PC-9 (cell line): ENCODE measurements at regions of chr19 and their contacts with region 1.

Region 1: DNA sequence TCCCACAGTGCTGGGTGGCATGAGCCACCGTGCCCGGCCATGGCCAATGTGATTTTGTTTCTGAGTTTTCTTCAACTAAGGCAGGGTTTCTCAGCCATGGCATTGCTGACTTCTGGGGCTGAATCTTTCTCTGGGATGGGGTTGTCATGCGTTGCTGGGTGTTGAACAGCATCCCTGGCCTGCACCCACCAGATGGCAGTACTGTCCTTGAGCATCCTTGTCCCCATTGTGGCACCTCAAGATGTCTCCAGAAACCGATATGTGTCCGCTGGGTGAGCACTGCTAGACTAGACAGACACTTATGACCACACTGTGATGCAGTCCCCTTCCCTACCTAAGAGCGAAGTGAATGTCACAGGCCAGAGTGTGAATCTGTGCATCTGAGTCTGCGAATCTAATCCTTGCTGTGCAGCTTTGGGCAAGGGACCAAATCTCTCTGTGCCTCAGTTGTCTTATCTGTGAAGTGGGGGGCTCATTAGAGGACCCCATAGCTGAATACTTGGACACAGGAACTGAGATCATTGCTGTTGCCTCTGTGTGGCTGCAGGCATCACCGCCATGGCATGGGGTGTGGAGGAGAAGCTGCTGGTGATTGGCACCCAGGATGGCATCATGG is 50.3 kb upstream of the SIN3B start:
- DNase-seq: peak; percentile 54 to 61
- H3K4me3 ChIP-seq: no peak overlapping the region
- H3K27ac ChIP-seq: no peak overlapping the region
- H3K4me1 ChIP-seq: no peaks in the 10 kb centered on the region
- H3K27me3 ChIP-seq: no peaks in the 10 kb centered on the region
- CTCF ChIP-seq: peak; percentile 83

Region 2: DNA sequence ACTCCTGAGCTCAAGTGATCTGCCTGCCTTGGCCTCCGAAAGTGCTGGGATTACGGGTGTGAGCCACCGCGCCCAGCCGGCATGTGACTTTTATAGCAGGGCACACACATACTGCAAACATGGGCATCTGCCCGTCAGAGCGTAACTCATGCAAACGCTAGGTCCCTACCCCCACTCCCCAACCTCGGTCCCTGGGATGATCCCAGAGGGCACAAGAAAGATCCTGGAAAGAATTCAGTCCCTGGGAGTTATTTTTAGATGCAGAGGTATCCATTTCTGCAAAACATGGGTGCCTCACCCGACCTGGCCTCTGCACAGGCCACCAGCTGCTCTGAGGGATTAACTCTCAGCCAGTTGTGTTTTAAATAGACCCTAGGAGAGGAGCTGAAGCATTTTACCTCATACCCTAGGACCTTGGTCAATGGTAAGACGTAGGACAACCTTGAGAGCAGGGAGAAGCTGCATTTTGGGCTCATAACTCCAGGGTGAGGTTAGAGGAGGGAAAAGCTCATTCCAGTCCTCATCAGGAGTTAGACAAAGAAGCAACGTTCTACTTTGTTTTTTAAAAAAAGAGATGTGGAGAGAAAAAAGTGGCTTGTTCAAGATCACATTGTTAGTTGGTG is 107.1 kb before region 1 on chr19:
- CTCF ChIA-PET with region 1: interaction called, 15 read pairs
- POLR2A ChIA-PET with region 1: no interaction called
- intact Hi-C with region 1: no loop called
- DNase-seq: no peak
- H3K4me3 ChIP-seq: no peak overlapping the region
- H3K27ac ChIP-seq: no peak overlapping the region
- H3K4me1 ChIP-seq: peaks cover 2% of the 10 kb centered on the region; the same call in 1 of the 2 replicates
- H3K27me3 ChIP-seq: no peaks in the 10 kb centered on the region
- CTCF ChIP-seq: no peak

Region 3: GRCh38 chr19:16726916-16727315 is 52.0 kb before region 1 on chr19:
- CTCF ChIA-PET with region 1: no interaction called
- POLR2A ChIA-PET with region 1: no interaction called
- intact Hi-C with region 1: no loop called
- DNase-seq: no peak
- H3K4me3 ChIP-seq: no peak overlapping the region
- H3K27ac ChIP-seq: no peak overlapping the region
- H3K4me1 ChIP-seq: no peaks in the 10 kb centered on the region
- H3K27me3 ChIP-seq: no peaks in the 10 kb centered on the region
- CTCF ChIP-seq: no peak

Region 4: DNA sequence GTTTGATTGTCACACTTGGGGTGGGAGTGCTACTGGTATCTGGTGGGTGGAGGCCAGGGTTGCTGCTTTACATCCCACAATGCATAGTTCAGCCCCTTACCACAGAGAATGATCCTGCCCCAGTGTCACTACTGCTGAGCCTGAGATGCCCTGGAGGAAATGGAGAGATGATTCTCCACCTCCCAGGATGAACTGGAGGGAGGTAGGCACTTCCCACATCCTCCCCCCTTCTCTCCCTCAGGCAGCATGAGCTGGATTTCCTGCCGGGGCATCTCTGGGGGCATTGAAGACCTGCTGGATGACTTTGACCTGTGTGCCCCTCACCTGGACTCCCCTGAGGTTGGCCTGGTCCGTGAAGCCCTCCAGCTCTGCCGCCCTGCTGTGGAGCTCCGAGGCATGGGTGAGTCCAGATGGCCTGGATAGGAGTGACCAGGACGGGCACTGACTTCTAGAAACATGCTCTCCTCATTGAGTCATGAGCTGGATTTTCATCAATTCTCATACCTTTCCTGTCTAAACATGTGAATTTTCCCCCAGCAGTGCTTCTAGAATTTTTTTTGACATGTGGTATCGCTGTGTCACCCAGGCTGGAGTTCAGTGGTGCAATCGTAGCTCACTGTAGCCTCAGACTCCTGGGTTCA is 14.0 kb before region 1 on chr19:
- CTCF ChIA-PET with region 1: no interaction called
- POLR2A ChIA-PET with region 1: no interaction called
- intact Hi-C with region 1: no loop called
- DNase-seq: no peak
- H3K4me3 ChIP-seq: no peak overlapping the region
- H3K27ac ChIP-seq: no peak overlapping the region
- H3K4me1 ChIP-seq: no peaks in the 10 kb centered on the region
- H3K27me3 ChIP-seq: no peaks in the 10 kb centered on the region
- CTCF ChIP-seq: no peak

Region 5: GRCh38 chr19:16829010-16829821 is 50.3 kb after region 1 on chr19 and contains the start of gene SIN3B:
- CTCF ChIA-PET with region 1: no interaction called
- POLR2A ChIA-PET with region 1: no interaction called
- intact Hi-C with region 1: loop called (anchors 5 kb)
- DNase-seq: peak; percentile 86 to 88
- H3K4me3 ChIP-seq: peak within 1 kb of the TSS; percentile 94
- H3K27ac ChIP-seq: 0 out of 2 replicates have a peak within 1 kb of the TSS, but pooled peaks have one; percentile 3
- H3K4me1 ChIP-seq: peaks cover 25% of the 10 kb centered on the region
- H3K27me3 ChIP-seq: no peaks in the 10 kb centered on the region
- CTCF ChIP-seq: no peak
- total RNA-seq, gene SIN3B: 72.6 and 83.8 TPM in 2 replicates

Region 6: DNA sequence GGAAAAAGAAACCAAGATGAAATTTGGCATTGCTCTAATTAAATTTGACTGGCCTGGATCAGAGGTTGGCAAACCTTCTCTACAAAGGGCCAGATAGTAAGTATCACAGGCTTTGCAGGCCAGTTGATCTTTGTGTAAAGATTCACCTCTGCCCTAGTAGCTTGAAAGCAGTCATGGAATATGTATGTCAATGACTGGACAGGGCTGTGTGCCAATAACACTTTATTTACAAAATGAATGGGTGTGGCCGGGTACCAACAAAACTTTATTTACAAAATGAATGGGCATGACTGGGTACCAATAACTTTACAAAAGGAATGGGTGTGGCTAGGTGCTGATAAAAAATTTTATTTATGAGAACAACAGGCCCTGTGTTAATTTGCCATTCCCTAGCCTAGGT is 70.3 kb after region 1 on chr19:
- CTCF ChIA-PET with region 1: no interaction called
- POLR2A ChIA-PET with region 1: no interaction called
- intact Hi-C with region 1: loop called (anchors 5 kb)
- DNase-seq: peak in 1 of 2 experiments; percentile 85
- H3K4me3 ChIP-seq: 0 out of 2 replicates have a peak overlapping the region, but pooled peaks have one; percentile 4
- H3K27ac ChIP-seq: peak overlapping the region; percentile 63
- H3K4me1 ChIP-seq: peaks cover 27% of the 10 kb centered on the region
- H3K27me3 ChIP-seq: no peaks in the 10 kb centered on the region
- CTCF ChIP-seq: no peak

Region 7: GRCh38 chr19:16899566-16900075 is 120.7 kb after region 1 on chr19:
- CTCF ChIA-PET with region 1: no interaction called
- POLR2A ChIA-PET with region 1: no interaction called
- intact Hi-C with region 1: loop called (anchors 2 kb)
- DNase-seq: peak; percentile 45 to 48
- H3K4me3 ChIP-seq: no peak overlapping the region
- H3K27ac ChIP-seq: no peak overlapping the region
- H3K4me1 ChIP-seq: peaks cover 3% of the 10 kb centered on the region; the same call in 1 of the 2 replicates
- H3K27me3 ChIP-seq: no peaks in the 10 kb centered on the region
- CTCF ChIP-seq: peak; percentile 82

Region 8: GRCh38 chr19:17052439-17053210 is 273.7 kb after region 1 on chr19:
- CTCF ChIA-PET with region 1: interaction called, 5 read pairs
- POLR2A ChIA-PET with region 1: no interaction called
- intact Hi-C with region 1: loop called (anchors 1 kb)
- DNase-seq: peak; percentile 57 to 61
- H3K4me3 ChIP-seq: no peak overlapping the region
- H3K27ac ChIP-seq: no peak overlapping the region
- H3K4me1 ChIP-seq: peaks cover 12% of the 10 kb centered on the region
- H3K27me3 ChIP-seq: no peaks in the 10 kb centered on the region
- CTCF ChIP-seq: peak; percentile 89

Region 9: DNA sequence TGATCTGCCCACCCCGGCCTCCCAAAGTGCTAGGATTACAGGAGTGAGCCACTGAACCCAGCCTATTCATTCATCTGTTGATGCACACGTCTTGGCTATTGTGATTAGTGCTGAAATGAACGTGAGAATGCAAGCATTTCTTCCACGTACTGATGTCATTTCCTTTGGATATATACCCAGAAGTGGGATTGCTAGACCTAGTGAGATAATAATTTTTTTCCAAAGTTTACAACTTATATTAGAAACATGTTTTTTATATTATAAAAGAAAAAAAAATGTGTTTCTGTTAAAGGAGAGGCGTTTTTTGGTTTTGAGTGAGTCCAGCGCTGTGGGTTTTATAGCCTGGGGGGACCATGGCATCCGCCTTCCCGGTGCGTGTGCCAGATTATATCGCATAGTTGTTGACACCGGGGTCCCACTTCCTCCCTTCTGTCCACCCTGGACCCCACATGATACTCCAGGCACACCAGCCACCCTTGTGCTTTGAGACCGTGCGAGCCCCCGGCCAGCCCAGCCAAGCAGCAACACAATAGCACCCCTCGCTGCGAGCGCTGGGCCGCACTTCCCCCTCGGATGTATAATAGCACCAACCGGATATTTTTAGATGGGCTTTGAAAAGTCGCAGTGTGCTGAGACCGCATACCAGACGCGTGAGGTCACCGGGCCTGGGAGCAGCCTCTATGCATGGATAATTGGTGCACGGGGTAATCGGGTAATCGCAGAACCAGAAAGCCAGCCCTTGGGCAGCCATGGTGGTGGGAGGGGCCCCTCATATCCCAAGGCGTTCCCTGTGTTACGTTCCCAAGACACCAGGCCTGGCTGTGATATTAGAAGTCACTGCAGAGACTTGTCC is 356.3 kb after region 1 on chr19:
- CTCF ChIA-PET with region 1: no interaction called
- POLR2A ChIA-PET with region 1: interaction called, 55 read pairs
- intact Hi-C with region 1: no loop called
- DNase-seq: peak; percentile 95 to 98
- H3K4me3 ChIP-seq: peak overlapping the region; percentile 54
- H3K27ac ChIP-seq: peak overlapping the region; percentile 93
- H3K4me1 ChIP-seq: peaks cover 46% of the 10 kb centered on the region
- H3K27me3 ChIP-seq: no peaks in the 10 kb centered on the region
- CTCF ChIP-seq: no peak